Caco-2 (cell line): ENCODE measurements at regions of chr4 and their contacts with region 1.

Region 1: DNA sequence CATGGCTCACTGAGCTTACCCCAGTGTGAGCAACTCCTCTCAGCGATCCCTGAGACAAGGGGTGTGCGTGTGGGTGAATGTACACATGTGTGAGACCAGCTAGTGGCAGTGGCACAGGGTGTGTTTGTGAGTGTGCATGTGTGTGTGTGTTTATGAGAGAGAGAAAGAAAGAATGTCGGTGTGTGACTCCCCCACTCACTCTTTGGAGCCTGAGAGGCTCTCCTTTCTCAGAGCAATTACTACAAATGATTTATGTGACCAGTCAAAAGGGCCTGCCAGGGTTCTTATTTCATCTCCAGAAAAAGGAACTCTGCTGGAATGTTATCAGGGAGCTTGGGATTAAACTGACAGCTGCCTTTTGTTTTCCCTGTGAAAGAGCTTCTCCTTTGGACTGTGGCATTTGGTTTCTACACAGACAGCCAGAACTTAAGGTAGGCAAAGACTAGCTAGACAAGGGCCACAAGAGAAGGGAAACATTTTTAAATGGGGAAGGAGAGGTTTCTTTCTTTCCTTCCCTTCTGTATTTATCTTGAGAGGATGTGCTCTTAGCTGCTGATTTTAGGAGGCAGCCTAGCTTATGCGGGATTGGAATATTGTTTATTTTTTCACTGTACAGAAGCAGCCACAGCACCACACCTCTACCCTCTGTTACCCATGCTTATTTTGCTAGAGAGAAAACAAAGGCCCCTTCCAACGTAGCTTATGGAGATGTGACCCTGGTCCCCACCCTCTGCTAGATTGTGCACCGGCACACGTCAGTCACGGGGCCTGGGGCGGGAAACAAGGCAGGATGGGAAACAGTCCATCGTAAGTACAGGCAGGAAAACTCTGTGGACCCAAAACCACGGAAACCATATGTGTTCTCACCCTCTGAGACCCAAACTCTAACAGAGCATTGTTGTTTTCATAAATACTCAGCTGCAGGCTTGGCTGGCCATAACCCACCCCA is 143.5 kb downstream of the MGST2 start:
- DNase-seq: peak; percentile 59 to 66
- H3K4me3 ChIP-seq: no peak overlapping the region
- H3K4me3 Mint-ChIP-seq: peak overlapping the region; percentile 14
- H3K27ac Mint-ChIP-seq: peak overlapping the region; percentile 27
- H3K4me1 ChIP-seq: peaks cover 24% of the 10 kb centered on the region
- H3K4me1 Mint-ChIP-seq: peaks cover 28% of the 10 kb centered on the region
- H3K27me3 ChIP-seq: no peaks in the 10 kb centered on the region
- H3K27me3 Mint-ChIP-seq: no peaks in the 10 kb centered on the region
- CTCF ChIP-seq: no peak

Region 2: DNA sequence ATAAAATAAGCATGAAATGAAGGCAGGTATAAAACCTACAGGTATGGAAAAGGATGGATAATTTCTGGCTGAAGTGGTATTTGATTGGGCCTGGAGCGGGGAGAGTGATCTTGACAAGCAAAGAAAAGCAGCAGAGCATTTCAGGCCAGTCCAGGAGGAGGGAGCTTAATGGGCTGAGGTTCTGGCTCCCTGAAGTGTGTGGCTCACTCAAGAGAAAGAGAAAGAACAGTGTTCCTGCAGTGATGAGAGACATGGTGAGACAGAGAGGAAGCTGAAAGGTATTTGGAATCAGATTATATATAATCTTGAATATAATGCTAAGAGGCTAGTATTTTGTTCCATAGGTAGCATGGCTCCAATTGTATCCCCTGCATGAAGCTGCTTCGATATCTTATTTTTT is 10.0 kb after region 1 on chr4:
- CTCF ChIA-PET with region 1: no interaction called
- POLR2A ChIA-PET with region 1: no interaction called
- intact Hi-C with region 1: no loop called
- DNase-seq: no peak
- H3K4me3 ChIP-seq: no peak overlapping the region
- H3K4me3 Mint-ChIP-seq: no peak overlapping the region
- H3K27ac Mint-ChIP-seq: no peak overlapping the region
- H3K4me1 ChIP-seq: no peaks in the 10 kb centered on the region
- H3K4me1 Mint-ChIP-seq: peaks cover 15% of the 10 kb centered on the region
- H3K27me3 ChIP-seq: no peaks in the 10 kb centered on the region
- H3K27me3 Mint-ChIP-seq: no peaks in the 10 kb centered on the region
- CTCF ChIP-seq: no peak

Region 3: GRCh38 chr4:139841464-139842246 is 32.6 kb after region 1 on chr4:
- CTCF ChIA-PET with region 1: no interaction called
- POLR2A ChIA-PET with region 1: no interaction called
- intact Hi-C with region 1: loop called (anchors 5 kb)
- DNase-seq: peak; percentile 56 to 71
- H3K4me3 ChIP-seq: no peak overlapping the region
- H3K4me3 Mint-ChIP-seq: peak overlapping the region; percentile 13
- H3K27ac Mint-ChIP-seq: no peak overlapping the region
- H3K4me1 ChIP-seq: peaks cover 16% of the 10 kb centered on the region
- H3K4me1 Mint-ChIP-seq: peaks cover 15% of the 10 kb centered on the region
- H3K27me3 ChIP-seq: no peaks in the 10 kb centered on the region
- H3K27me3 Mint-ChIP-seq: no peaks in the 10 kb centered on the region
- CTCF ChIP-seq: peak in 1 of 2 experiments; percentile 26

Region 4: DNA sequence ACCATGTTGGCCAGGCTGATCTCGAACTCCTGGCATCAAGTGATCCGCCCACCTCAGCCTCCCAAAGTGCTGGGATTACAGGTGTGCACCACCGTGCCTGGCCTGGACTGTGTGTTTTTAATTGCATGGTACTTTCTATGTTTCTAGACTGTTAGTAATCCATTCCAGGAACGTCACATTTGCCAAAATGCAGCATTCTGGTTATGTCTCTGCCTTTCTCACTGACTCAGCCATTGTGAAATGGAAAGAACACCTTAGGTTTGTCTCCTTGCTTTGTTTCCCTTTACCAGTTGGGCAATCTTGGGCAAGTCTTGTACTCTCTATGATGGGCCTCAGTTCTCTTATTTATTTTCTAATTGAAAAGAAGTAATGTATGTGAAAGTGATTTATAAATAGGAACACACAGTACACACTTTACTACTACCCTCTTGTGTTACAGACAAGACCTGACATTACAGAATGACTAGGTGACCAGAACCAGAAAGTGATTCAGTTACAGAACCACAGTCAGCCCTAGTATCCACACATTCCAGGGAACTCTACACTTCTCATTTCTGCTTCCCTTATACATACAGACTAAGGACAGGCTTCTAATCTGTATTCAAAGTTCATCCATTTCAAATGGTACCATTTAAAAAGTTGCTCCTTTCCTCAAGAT is 43.7 kb after region 1 on chr4:
- CTCF ChIA-PET with region 1: no interaction called
- POLR2A ChIA-PET with region 1: interaction called, 3 read pairs
- intact Hi-C with region 1: loop called (anchors 1 kb)
- DNase-seq: no peak
- H3K4me3 ChIP-seq: no peak overlapping the region
- H3K4me3 Mint-ChIP-seq: no peak overlapping the region
- H3K27ac Mint-ChIP-seq: no peak overlapping the region
- H3K4me1 ChIP-seq: peaks cover 75% of the 10 kb centered on the region
- H3K4me1 Mint-ChIP-seq: peaks cover 42% of the 10 kb centered on the region
- H3K27me3 ChIP-seq: no peaks in the 10 kb centered on the region
- H3K27me3 Mint-ChIP-seq: no peaks in the 10 kb centered on the region
- CTCF ChIP-seq: no peak

Region 5: DNA sequence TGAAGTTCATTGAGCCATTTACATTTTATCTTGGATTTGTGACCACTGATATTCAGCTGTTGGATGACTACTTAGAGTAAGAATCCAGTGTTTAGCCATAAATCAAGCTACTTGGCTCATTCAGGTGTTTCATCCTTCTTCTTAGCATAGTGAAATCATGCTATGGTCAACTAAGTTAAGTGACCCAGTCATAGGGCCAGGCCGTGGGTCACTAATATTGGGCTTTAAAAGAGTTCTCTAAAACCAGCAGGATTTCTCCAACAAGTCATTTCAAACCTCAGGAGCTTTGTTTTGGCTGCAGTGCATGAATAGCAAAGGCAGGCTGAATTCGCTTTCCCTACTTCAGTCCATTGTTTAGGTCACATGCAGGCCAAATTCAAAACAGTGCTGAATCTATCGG is 163.9 kb after region 1 on chr4:
- CTCF ChIA-PET with region 1: no interaction called
- POLR2A ChIA-PET with region 1: no interaction called
- intact Hi-C with region 1: no loop called
- DNase-seq: no peak
- H3K4me3 ChIP-seq: no peak overlapping the region
- H3K4me3 Mint-ChIP-seq: no peak overlapping the region
- H3K27ac Mint-ChIP-seq: no peak overlapping the region
- H3K4me1 ChIP-seq: peaks cover 12% of the 10 kb centered on the region; the same call in 1 of the 2 replicates
- H3K4me1 Mint-ChIP-seq: peaks cover 11% of the 10 kb centered on the region
- H3K27me3 ChIP-seq: no peaks in the 10 kb centered on the region
- H3K27me3 Mint-ChIP-seq: no peaks in the 10 kb centered on the region
- CTCF ChIP-seq: no peak